ENCODE measurements at regions of chr18 and their contacts with region 1.

Region 1: GRCh38 chr18:864872-865273 is 39.8 kb upstream of the ADCYAP1 start:
- DNase-seq: peak; percentile 49 to 81 (median 59)
- ATAC-seq: peak in 3 of 4 donors; percentile 80 to 92 (median 89)
- H3K4me3 ChIP-seq: no peak overlapping the region
- H3K27ac ChIP-seq: no peak overlapping the region
- H3K4me1 ChIP-seq: peaks cover 0 to 5% (median 0%) of the 10 kb centered on the region in 12 donors
- H3K27me3 ChIP-seq: peaks cover 0 to 28% (median 13%) of the 10 kb centered on the region in 9 donors
- CTCF ChIP-seq: peak; percentile 89 to 99 (median 94)
- POLR2A ChIP-seq: no peak

Region 2: GRCh38 chr18:961644-962355 is 96.9 kb after region 1 on chr18:
- intact Hi-C with region 1: loop called in 9 of 10 experiments (anchors 1 to 10 kb)
- DNase-seq: peak in 1 of 5 donors; percentile 16
- ATAC-seq: no peak
- H3K4me3 ChIP-seq: peak overlapping the region in 11 of 12 donors; percentile 3 to 56 (median 45)
- H3K27ac ChIP-seq: peak overlapping the region in 4 of 12 donors; percentile 11 to 51 (median 24)
- H3K4me1 ChIP-seq: peaks cover 0 to 8% (median 0%) of the 10 kb centered on the region in 12 donors
- H3K27me3 ChIP-seq: peaks cover 0 to 10% (median 0%) of the 10 kb centered on the region in 9 donors
- CTCF ChIP-seq: peak; percentile 85 to 95 (median 90)
- POLR2A ChIP-seq: no peak

Region 3: DNA sequence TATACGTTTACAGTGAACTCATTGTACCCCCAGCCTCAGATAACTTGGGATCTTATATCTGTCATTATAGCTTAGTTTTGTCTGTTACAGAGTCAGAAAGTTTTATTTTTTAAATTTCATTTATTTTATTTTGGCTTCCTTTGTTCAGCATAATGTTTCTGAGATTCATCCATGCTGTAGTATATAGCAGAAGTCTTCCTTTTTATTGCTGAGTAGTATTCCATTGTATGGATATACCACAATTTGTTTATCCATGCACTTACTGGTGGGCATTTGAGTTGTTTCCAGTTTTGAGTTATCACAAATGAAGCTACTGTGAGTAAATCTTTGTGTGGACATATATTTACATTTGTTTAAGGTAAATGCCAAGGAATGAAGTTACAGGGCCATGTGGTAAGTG is 162.1 kb after region 1 on chr18:
- intact Hi-C with region 1: no loop called
- DNase-seq: no peak
- ATAC-seq: no peak
- H3K4me3 ChIP-seq: no peak overlapping the region
- H3K27ac ChIP-seq: no peak overlapping the region
- H3K4me1 ChIP-seq: no peaks in the 10 kb centered on the region
- H3K27me3 ChIP-seq: no peaks in the 10 kb centered on the region
- CTCF ChIP-seq: no peak
- POLR2A ChIP-seq: no peak

Region 4: DNA sequence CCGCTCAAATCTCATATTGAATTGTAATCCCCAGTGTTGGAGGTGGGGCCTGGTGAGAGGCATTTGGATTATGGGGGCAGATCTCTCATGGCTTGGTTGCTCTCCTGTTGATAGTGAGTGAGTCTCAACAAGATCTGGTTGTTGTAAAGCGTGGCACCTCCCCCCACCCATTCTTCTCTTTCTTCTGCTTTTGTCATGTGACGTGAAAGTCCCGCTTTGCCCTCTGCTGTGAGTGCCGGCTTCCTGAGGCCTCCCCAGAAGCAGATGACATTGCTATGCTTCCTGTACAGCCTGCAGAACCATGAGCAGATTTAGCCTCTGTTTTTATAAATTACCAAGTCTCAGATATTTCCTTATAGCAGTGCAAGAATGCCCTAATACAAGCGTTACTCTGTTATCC is 713.6 kb after region 1 on chr18:
- intact Hi-C with region 1: loop called in 3 of 10 experiments (anchors 10 kb)
- DNase-seq: peak in 2 of 5 donors; percentile 9 to 20
- ATAC-seq: no peak
- H3K4me3 ChIP-seq: no peak overlapping the region
- H3K27ac ChIP-seq: peak overlapping the region in 1 of 12 donors; percentile 21
- H3K4me1 ChIP-seq: no peaks in the 10 kb centered on the region
- H3K27me3 ChIP-seq: peaks cover 0 to 3% (median 0%) of the 10 kb centered on the region in 9 donors
- CTCF ChIP-seq: no peak
- POLR2A ChIP-seq: no peak

Region 5: GRCh38 chr18:1585879-1586488 is 721.1 kb after region 1 on chr18:
- intact Hi-C with region 1: loop called in 2 of 10 experiments (anchors 10 kb)
- DNase-seq: no peak
- ATAC-seq: peak in 2 of 4 donors; percentile 51 to 58
- H3K4me3 ChIP-seq: no peak overlapping the region
- H3K27ac ChIP-seq: no peak overlapping the region
- H3K4me1 ChIP-seq: peaks cover 0 to 4% (median 0%) of the 10 kb centered on the region in 12 donors
- H3K27me3 ChIP-seq: peaks cover 0 to 10% (median 0%) of the 10 kb centered on the region in 9 donors
- CTCF ChIP-seq: peak; percentile 26 to 66 (median 51)
- POLR2A ChIP-seq: no peak

Region 6: DNA sequence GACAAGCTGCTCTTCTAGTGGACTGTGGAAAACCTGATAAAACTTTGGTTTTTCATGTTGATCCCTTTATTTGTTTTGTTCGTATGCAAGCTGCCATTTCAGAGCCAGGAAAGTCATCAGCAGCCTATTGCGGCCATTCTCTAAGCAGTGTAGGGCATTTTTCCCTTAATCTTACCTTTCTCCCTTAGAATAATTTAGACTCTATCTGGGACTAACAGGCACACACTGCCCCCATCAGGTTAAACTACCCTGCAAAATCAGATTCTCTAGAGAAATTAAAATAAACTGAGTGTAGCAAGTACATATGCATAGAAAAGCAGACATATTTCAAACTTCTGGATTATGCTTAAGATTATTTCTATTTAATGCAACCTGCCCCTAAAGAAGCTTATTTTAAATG is 1359.0 kb after region 1 on chr18:
- intact Hi-C with region 1: loop called in 2 of 10 experiments (anchors 10 kb)
- DNase-seq: peak in 1 of 5 donors; percentile 26
- ATAC-seq: peak in 3 of 4 donors; percentile 45 to 70 (median 46)
- H3K4me3 ChIP-seq: peak overlapping the region in 9 of 12 donors; percentile 16 to 43 (median 24)
- H3K27ac ChIP-seq: no peak overlapping the region
- H3K4me1 ChIP-seq: no peaks in the 10 kb centered on the region
- H3K27me3 ChIP-seq: peaks cover 0 to 4% (median 0%) of the 10 kb centered on the region in 9 donors
- CTCF ChIP-seq: peak; percentile 32 to 68 (median 53)
- POLR2A ChIP-seq: no peak

Region 7: DNA sequence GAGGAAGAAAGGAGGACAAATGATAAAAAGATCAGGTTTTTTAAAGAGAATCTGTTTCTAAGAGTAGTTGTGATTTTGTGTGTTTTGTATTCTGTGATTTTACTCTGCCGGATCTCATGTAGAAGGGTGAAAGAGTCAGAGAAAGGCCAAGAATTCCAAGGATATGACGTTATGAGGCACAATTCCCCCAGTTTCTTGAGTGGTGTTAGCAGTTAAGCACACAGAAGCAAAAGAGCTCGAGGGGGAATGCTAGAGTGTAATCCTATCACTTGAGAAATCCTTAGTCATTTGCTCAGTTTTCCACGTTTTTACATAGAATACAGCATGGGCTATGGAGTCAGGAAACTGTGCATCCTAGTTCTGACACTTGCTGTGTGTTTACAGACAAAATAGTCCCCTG is 1671.6 kb after region 1 on chr18:
- intact Hi-C with region 1: loop called in 6 of 10 experiments (anchors 5 to 10 kb)
- DNase-seq: no peak
- ATAC-seq: peak in 1 of 4 donors; percentile 32
- H3K4me3 ChIP-seq: no peak overlapping the region
- H3K27ac ChIP-seq: no peak overlapping the region
- H3K4me1 ChIP-seq: no peaks in the 10 kb centered on the region
- H3K27me3 ChIP-seq: no peaks in the 10 kb centered on the region
- CTCF ChIP-seq: no peak
- POLR2A ChIP-seq: no peak

Region 8: DNA sequence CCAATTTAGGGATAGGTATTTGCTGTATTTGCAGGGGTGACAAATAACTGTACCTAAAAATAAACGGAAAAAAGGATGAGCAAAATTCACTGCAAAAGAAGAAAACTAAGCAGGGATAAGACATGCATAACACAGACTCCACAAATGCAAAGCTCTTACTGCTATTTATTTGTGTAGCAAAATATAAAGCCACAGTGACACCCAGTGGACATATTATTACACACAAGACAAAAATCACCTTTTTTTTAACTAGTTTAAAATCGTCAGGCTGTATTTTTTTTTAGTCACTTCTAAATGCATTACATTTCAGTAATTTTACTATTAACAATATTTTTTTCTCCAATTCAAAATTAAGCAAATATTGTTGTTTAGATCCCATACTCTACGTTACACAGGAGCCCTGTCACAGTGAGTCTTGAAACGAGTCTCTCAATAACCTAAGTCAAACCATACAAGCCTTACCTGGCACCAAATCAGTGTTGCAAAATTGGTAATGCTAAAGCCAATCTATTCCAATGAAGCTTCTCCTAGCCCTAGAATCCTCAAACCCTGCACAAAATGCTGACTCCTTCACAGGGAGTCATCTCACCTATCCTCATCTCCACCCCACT is 1682.7 kb after region 1 on chr18:
- intact Hi-C with region 1: loop called (anchors 5 to 10 kb)
- DNase-seq: no peak
- ATAC-seq: no peak
- H3K4me3 ChIP-seq: no peak overlapping the region
- H3K27ac ChIP-seq: no peak overlapping the region
- H3K4me1 ChIP-seq: no peaks in the 10 kb centered on the region
- H3K27me3 ChIP-seq: no peaks in the 10 kb centered on the region
- CTCF ChIP-seq: peak; percentile 38 to 71 (median 53)
- POLR2A ChIP-seq: no peak